ENCODE measurements at regions of chr15 and their contacts with region 1.

Region 1: DNA sequence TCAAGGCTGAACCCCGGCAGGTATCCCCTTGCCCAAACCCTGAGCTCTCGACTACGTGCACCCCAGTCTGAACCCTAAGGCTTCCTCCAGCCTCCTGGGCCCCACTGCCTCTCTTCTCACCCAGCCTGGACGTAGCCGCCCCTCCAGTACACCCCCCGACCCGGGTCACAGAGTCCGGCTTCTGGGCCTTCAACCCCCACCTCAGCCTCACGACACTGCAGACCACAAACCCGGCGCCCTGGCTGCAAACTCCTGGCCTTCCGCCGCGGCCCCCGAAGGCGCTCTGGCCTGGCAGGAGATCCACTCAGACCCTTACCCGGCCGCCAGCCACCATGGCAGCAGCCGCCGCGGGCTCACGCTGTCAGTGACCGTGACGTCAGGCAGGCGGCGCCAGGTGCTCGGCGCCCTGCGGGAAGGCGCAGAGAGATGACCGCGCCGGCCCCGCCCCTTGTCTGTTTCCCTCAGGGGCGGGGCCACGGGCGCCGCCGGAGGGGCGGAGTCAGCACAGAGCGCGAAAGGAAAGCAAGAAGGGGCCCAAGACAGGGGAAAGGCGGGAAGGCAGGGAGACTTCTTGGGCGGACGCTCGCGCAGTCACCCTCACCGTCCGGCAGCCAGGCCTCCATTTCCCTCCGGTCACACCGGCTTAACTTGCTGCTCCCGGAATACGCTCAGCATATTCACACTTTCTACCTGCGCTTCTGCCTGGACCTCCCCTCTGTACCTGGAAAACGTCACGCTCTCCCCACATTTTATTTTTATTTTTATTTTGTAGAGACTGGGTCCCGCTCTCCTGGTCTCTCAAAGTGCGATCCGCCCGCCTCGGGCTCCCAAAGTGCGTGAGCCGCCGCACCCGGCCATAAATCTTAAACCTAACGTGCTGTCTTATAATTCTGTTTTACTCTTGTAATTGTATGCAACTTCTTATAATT is at the start of gene RMDN3:
- DNase-seq: peak; percentile 83 to 97 (median 91)
- ATAC-seq: peak; percentile 96 to 98 (median 97)
- H3K4me3 ChIP-seq: peak within 1 kb of the TSS; percentile 83 to 94
- H3K4me3 Mint-ChIP-seq: peak within 1 kb of the TSS; percentile 89 to 95 (median 90)
- H3K27ac ChIP-seq: peak within 1 kb of the TSS; percentile 72
- H3K27ac Mint-ChIP-seq: peak within 1 kb of the TSS; percentile 91 to 97
- H3K4me1 ChIP-seq: peaks cover 4 to 30% of the 10 kb centered on the region in 2 experiments
- H3K4me1 Mint-ChIP-seq: peaks cover 26 to 35% (median 34%) of the 10 kb centered on the region in 3 donors
- H3K27me3 ChIP-seq: no peaks in the 10 kb centered on the region
- H3K27me3 Mint-ChIP-seq: no peaks in the 10 kb centered on the region
- total RNA-seq, gene RMDN3: 23.9 to 32.3 (median 26.9) TPM

Region 2: DNA sequence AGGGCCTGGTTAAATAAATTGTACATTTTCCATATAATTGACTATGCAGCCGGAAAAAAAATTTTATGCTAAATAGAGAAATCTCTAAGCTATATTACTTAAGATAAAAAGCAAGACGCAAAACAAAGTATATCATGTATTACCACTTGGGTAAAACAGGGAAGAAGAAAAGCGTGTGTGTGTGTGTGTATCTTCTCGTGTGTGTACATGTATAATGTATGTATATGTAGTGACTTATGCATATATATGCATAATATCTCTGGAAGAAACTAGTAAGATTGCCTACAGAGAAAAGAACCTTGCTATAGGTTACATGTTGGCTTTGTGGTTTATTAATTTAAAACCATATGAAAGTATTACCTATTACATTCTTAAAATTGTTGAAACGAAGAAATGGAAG is 142.1 kb before region 1 on chr15:
- CTCF ChIA-PET with region 1: no interaction called
- POLR2A ChIA-PET with region 1: interaction called in 1 of 2 experiments, 10 read pairs
- DNase-seq: no peak
- ATAC-seq: no peak
- H3K4me3 ChIP-seq: no peak overlapping the region
- H3K4me3 Mint-ChIP-seq: no peak overlapping the region
- H3K27ac ChIP-seq: no peak overlapping the region
- H3K27ac Mint-ChIP-seq: no peak overlapping the region
- H3K4me1 ChIP-seq: no peaks in the 10 kb centered on the region
- H3K4me1 Mint-ChIP-seq: no peaks in the 10 kb centered on the region
- H3K27me3 ChIP-seq: no peaks in the 10 kb centered on the region
- H3K27me3 Mint-ChIP-seq: no peaks in the 10 kb centered on the region

Region 3: DNA sequence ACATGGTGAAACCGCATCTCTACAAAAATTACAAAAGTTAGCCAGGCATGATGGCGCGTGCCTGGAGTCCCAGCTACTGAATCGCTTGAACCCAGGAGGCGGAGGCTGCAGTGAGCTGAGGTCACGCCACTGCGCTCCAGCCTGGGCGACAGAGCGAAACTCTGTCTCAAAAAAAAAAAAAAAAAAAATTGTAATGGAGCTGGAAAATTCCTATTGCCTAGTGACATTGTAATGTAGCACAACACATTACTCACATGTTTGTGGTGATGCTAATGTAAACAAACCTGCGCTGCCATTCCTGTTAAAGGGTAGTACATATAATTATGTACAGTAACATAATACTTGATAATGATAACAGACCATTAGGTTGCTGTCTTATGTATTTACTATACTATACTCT is 122.0 kb before region 1 on chr15:
- CTCF ChIA-PET with region 1: no interaction called
- POLR2A ChIA-PET with region 1: no interaction called
- DNase-seq: no peak
- ATAC-seq: no peak
- H3K4me3 ChIP-seq: no peak overlapping the region
- H3K4me3 Mint-ChIP-seq: no peak overlapping the region
- H3K27ac ChIP-seq: no peak overlapping the region
- H3K27ac Mint-ChIP-seq: no peak overlapping the region
- H3K4me1 ChIP-seq: no peaks in the 10 kb centered on the region
- H3K4me1 Mint-ChIP-seq: no peaks in the 10 kb centered on the region
- H3K27me3 ChIP-seq: no peaks in the 10 kb centered on the region
- H3K27me3 Mint-ChIP-seq: no peaks in the 10 kb centered on the region

Region 4: GRCh38 chr15:40743921-40744814 is 11.0 kb before region 1 on chr15:
- CTCF ChIA-PET with region 1: interaction called in 1 of 2 experiments, 10 read pairs
- POLR2A ChIA-PET with region 1: interaction called in 1 of 2 experiments, 3 read pairs
- DNase-seq: peak in 34 of 35 experiments; percentile 33 to 85 (median 55)
- ATAC-seq: peak; percentile 90 to 99 (median 94)
- H3K4me3 ChIP-seq: no peak overlapping the region
- H3K4me3 Mint-ChIP-seq: no peak overlapping the region
- H3K27ac ChIP-seq: peak overlapping the region; percentile 80
- H3K27ac Mint-ChIP-seq: peak overlapping the region; percentile 91 to 93
- H3K4me1 ChIP-seq: peaks cover 0 to 22% of the 10 kb centered on the region in 2 experiments
- H3K4me1 Mint-ChIP-seq: peaks cover 0 to 22% (median 6%) of the 10 kb centered on the region in 3 donors
- H3K27me3 ChIP-seq: no peaks in the 10 kb centered on the region
- H3K27me3 Mint-ChIP-seq: no peaks in the 10 kb centered on the region

Measured in T-cell (primary cell).